ENCODE measurements at regions of chr5 and their contacts with region 1.

Region 1: GRCh38 chr5:40547994-40548575 is 131.6 kb upstream of the PTGER4 start:
- DNase-seq: no peak
- H3K4me3 ChIP-seq: no peak overlapping the region
- CTCF ChIP-seq: no peak
- POLR2A ChIP-seq: no peak

Region 2: GRCh38 chr5:39680213-39680612 is 867.9 kb before region 1 on chr5:
- intact Hi-C with region 1: loop called (anchors 5 kb)
- DNase-seq: no peak
- H3K4me3 ChIP-seq: no peak overlapping the region
- CTCF ChIP-seq: no peak
- POLR2A ChIP-seq: no peak

Region 3: GRCh38 chr5:40486437-40487275 is 61.4 kb before region 1 on chr5:
- intact Hi-C with region 1: no loop called
- DNase-seq: peak in 1 of 2 donors; percentile 19
- H3K4me3 ChIP-seq: no peak overlapping the region
- CTCF ChIP-seq: no peak
- POLR2A ChIP-seq: no peak

Region 4: GRCh38 chr5:40497573-40497972 is 50.5 kb before region 1 on chr5:
- intact Hi-C with region 1: no loop called
- DNase-seq: no peak
- H3K4me3 ChIP-seq: no peak overlapping the region
- CTCF ChIP-seq: no peak
- POLR2A ChIP-seq: no peak

Region 5: GRCh38 chr5:40578501-40579451 is 30.7 kb after region 1 on chr5:
- intact Hi-C with region 1: no loop called
- DNase-seq: no peak
- H3K4me3 ChIP-seq: no peak overlapping the region
- CTCF ChIP-seq: no peak
- POLR2A ChIP-seq: no peak

Region 6: DNA sequence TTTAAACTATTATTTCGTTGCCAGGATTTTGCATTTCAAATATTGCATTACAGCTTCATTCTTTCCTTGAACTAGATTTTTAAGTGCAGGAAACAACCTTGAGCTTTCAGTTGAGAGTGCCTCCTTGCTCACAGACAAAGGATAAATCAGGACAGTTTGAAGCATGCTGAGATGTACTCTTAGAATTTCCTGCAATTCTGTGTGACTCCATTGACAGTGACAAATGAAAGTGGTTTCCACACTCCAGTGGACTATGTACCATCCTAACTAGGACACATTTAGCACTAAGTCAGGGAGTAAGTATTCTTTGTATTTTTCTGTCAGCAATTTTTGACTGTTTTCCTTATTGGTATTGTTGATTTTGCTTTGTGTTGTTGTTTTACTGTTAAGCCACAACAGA is 1062.3 kb after region 1 on chr5:
- intact Hi-C with region 1: no loop called
- DNase-seq: no peak
- H3K4me3 ChIP-seq: no peak overlapping the region
- CTCF ChIP-seq: no peak
- POLR2A ChIP-seq: no peak

Measured in lower leg skin (tissue), 4 donors.